Mammary epithelial cell (primary cell): ENCODE measurements at regions of chrX and their contacts with region 1.

Region 1: DNA sequence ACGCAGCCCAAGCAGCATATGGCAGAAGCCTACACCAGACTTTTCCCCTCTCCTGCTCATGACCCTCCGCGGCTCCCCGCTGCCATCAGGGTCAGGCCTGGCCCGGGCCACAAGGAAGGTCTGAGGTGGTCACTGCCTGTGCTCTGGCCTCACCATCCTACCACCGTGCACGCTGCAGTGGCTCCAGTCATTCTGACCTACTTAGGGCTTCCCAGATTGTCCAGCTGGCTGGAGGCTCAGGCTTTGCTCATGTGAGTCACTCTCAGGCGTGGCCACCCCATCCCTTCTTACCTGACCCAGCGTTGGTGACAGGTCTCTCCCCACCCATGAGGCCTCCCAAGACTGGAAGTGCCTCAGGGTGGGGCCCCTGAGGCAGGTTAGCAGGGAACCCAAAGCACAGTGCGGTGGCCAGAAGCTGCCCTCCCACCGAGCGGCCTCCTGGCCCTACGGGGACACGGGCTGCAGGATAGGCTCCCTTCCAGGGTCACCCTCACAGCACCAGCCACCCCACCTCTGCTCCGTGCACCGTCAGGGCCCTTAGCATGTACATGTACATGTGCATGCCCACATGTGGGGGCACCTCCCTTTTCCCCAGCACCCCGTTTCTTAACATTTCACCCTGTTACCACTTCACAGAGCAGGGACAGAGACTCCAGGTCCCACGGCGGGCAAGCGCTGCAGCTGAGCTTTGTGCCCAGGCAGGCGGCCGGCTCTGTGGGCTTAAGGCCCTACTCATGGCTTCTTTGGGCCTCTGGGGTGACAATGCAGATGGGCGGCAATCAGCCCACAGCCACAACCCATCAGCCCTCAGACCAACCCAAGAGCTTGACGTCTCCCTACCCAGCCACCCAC is 2.1 kb downstream of the TREX2 start:
- DNase-seq: peak; percentile 13
- H3K4me3 ChIP-seq: no peak overlapping the region
- H3K27ac ChIP-seq: no peak overlapping the region
- H3K4me1 ChIP-seq: peaks cover 22% of the 10 kb centered on the region
- H3K27me3 ChIP-seq: no peaks in the 10 kb centered on the region
- CTCF ChIP-seq: no peak

Region 2: DNA sequence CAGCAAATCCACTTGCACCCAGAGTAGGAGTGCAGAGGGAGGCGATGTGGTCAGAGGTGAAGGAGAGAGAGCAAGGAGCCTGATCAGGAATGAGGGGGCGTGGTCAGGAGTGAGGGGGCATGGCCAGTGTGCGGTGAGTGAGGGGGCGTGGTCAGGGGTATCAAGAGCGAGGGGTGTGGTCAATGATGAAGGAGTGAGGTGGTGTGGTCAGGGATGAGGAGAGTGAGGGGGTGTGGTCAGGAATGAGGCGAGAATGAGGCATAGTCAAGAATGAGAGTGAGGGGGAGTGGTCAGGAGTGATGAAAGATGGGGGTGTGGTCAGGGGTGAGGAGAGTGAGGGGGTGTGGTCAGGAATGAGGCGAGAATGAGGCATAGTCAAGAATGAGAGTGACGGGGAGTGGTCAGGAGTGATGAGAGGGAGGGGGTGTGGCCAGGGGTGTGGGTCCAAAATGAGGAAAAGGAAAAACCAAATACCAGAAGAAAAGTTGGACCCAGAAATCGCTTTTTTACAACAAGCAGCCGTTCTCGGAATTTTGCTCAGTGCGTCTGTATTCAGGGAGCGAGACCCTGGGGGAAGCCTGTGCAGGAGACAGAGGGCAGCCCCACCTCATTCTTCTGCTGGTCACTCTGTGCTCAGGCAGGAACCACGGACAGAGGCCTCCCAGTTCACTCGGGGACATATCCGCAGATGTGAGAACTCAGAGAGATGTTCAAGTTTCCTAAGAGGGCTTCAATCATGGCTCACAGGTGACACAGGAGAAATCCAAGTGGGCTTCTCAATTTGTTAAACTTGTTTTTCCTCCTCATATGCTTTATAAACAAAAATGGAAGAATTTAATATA is 217.1 kb before region 1 on chrX:
- CTCF ChIA-PET with region 1: no interaction called
- dilution Hi-C with region 1: no loop called
- in situ Hi-C with region 1: no loop called
- intact Hi-C with region 1: no loop called
- DNase-seq: peak; percentile 88
- H3K4me3 ChIP-seq: no peak overlapping the region
- H3K27ac ChIP-seq: peak overlapping the region; percentile 22
- H3K4me1 ChIP-seq: peaks cover 4% of the 10 kb centered on the region
- H3K27me3 ChIP-seq: no peaks in the 10 kb centered on the region
- CTCF ChIP-seq: no peak

Region 3: GRCh38 chrX:153297376-153297775 is 146.3 kb before region 1 on chrX:
- CTCF ChIA-PET with region 1: no interaction called
- dilution Hi-C with region 1: no loop called
- in situ Hi-C with region 1: no loop called
- intact Hi-C with region 1: no loop called
- DNase-seq: no peak
- H3K4me3 ChIP-seq: no peak overlapping the region
- H3K27ac ChIP-seq: no peak overlapping the region
- H3K4me1 ChIP-seq: no peaks in the 10 kb centered on the region
- H3K27me3 ChIP-seq: peaks cover 3% of the 10 kb centered on the region
- CTCF ChIP-seq: no peak

Region 4: GRCh38 chrX:153353416-153353815 is 90.3 kb before region 1 on chrX:
- CTCF ChIA-PET with region 1: no interaction called
- dilution Hi-C with region 1: no loop called
- in situ Hi-C with region 1: no loop called
- intact Hi-C with region 1: no loop called
- DNase-seq: no peak
- H3K4me3 ChIP-seq: no peak overlapping the region
- H3K27ac ChIP-seq: no peak overlapping the region
- H3K4me1 ChIP-seq: no peaks in the 10 kb centered on the region
- H3K27me3 ChIP-seq: no peaks in the 10 kb centered on the region
- CTCF ChIP-seq: no peak

Region 5: GRCh38 chrX:153460845-153461244 is 17.1 kb after region 1 on chrX:
- CTCF ChIA-PET with region 1: no interaction called
- dilution Hi-C with region 1: no loop called
- in situ Hi-C with region 1: no loop called
- intact Hi-C with region 1: no loop called
- DNase-seq: no peak
- H3K4me3 ChIP-seq: no peak overlapping the region
- H3K27ac ChIP-seq: no peak overlapping the region
- H3K4me1 ChIP-seq: peaks cover 41% of the 10 kb centered on the region
- H3K27me3 ChIP-seq: no peaks in the 10 kb centered on the region
- CTCF ChIP-seq: peak; percentile 37 to 53

Region 6: DNA sequence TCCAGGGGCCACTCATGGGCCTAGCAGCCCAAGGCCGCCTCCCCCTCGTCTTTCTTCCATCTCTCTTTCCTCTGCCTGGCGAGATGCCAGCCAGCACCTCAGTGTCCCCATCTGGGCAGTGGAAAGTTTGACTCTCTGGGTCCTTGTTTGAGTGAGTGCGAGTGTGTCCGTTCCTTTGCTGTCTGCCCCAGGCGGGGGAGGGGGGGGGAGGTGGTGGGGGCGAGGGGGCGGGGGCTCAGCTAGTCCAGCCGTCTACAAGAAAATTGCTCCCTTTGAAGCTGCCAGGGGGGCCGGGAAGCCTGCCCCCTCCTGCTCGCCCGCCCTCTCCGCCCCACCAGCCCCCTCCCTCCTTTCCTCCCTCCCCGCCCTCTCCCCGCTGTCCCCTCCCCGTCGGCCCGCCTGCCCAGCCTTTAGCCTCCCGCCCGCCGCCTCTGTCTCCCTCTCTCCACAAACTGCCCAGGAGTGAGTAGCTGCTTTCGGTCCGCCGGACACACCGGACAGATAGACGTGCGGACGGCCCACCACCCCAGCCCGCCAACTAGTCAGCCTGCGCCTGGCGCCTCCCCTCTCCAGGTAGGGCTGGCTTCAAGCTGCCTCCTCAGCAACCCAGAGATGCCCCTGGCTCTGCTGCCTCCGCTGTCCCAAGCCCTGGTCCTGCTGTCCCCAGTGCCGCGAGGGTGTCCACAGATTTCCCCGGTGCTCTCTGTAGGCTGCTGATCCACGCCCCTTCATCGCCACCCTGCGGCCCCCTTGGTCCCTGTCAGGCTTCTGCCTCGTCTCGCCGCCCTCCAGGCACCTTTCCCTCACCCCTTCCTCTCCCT is 51.0 kb after region 1 on chrX and contains the start of gene BGN:
- CTCF ChIA-PET with region 1: no interaction called
- dilution Hi-C with region 1: loop called (anchors 5 kb)
- in situ Hi-C with region 1: no loop called
- intact Hi-C with region 1: no loop called
- DNase-seq: no peak
- H3K4me3 ChIP-seq: peak within 1 kb of the TSS in 2 of 3 experiments; percentile 27 to 33
- H3K27ac ChIP-seq: no peak within 1 kb of the TSS
- H3K4me1 ChIP-seq: peaks cover 6% of the 10 kb centered on the region
- H3K27me3 ChIP-seq: no peaks in the 10 kb centered on the region
- CTCF ChIP-seq: no peak
- total RNA-seq, gene BGN: 2.6 to 13.5 TPM